HepG2 (cell line): ENCODE measurements at regions of chr2 and their contacts with region 1.

Region 1: DNA sequence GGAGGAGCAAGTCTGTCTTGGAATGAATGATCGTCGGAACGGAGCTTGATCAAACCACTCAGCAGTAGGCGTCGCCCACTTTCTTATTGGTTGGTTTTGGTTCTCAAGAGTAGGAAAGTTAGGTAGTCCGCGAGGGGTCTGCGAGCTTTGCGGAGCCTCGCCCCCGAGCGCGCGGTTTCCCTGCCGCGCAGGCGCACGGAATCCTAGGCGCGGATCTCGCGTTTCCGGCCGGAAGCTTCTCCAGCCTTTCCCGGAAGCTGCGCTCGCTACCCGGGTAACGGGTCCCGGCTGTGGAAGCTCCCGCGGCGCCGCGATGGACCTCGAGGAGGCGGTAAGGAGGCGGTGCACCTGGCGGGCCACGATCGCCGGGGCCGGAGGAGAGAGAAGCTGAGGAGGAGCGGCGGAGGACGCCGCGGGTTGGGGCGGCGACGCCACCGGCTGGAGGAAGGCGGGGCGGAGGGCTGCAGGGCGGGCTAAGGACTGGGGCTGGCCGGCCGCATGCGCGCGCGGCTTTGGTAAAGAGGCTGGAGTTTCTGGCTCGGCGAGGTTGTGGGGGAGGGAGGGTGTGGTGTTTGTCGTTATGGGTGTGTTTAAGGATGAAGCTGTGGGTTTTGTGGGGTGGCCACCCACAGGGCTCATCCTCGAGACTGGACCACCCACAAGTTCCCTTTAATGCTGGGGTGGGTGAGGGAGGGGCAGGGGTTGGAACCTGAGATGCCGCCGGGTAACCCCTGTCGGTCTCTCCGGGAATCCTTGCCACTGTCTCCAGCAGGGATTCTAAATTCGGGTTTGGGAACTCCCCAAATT is at the start of gene TAF1B:
- DNase-seq: peak; percentile 90
- ATAC-seq: peak; percentile 94
- H3K4me3 ChIP-seq: peak within 1 kb of the TSS; percentile 70 to 92 (median 81)
- H3K27ac ChIP-seq: peak within 1 kb of the TSS; percentile 74
- H3K4me1 ChIP-seq: peaks cover 39% of the 10 kb centered on the region
- H3K27me3 ChIP-seq: no peaks in the 10 kb centered on the region; a peak in 2 of 5 replicates
- CTCF ChIP-seq: peak; percentile 68
- EP300 ChIP-seq: peak in 1 of 2 experiments; percentile 29; a peak in 2 of 4 replicates
- POLR2A ChIP-seq: peak; percentile 69 to 84
- RAD21 ChIP-seq: peak; percentile 71
- total RNA-seq, gene TAF1B: 27.7 and 34.0 TPM in 2 replicates

Region 2: GRCh38 chr2:9548506-9548905 is 294.9 kb before region 1 on chr2:
- CTCF ChIA-PET with region 1: no interaction called
- POLR2A ChIA-PET with region 1: no interaction called
- in situ Hi-C with region 1: no loop called
- intact Hi-C with region 1: no loop called
- DNase-seq: no peak
- ATAC-seq: no peak
- H3K4me3 ChIP-seq: no peak overlapping the region
- H3K27ac ChIP-seq: no peak overlapping the region
- H3K4me1 ChIP-seq: peaks cover 44% of the 10 kb centered on the region
- H3K27me3 ChIP-seq: no peaks in the 10 kb centered on the region
- CTCF ChIP-seq: no peak
- EP300 ChIP-seq: no peak
- POLR2A ChIP-seq: no peak
- RAD21 ChIP-seq: no peak

Region 3: GRCh38 chr2:9813312-9814133 is 29.9 kb before region 1 on chr2:
- CTCF ChIA-PET with region 1: no interaction called
- POLR2A ChIA-PET with region 1: interaction called, 11 read pairs
- in situ Hi-C with region 1: no loop called
- intact Hi-C with region 1: no loop called
- DNase-seq: peak; percentile 56
- ATAC-seq: peak; percentile 90
- H3K4me3 ChIP-seq: peak overlapping the region; percentile 11 to 60 (median 32); a peak in 2 of 6 replicates
- H3K27ac ChIP-seq: no peak overlapping the region
- H3K4me1 ChIP-seq: peaks cover 23% of the 10 kb centered on the region; the same call in 1 of the 2 replicates
- H3K27me3 ChIP-seq: peaks cover 8 to 72% of the 10 kb centered on the region in 2 experiments; a peak in 4 of 5 replicates
- CTCF ChIP-seq: peak; percentile 99
- EP300 ChIP-seq: no peak
- POLR2A ChIP-seq: no peak
- RAD21 ChIP-seq: peak; percentile 93

Region 4: GRCh38 chr2:9820020-9820419 is 23.4 kb before region 1 on chr2:
- CTCF ChIA-PET with region 1: no interaction called
- POLR2A ChIA-PET with region 1: interaction called, 11 read pairs
- in situ Hi-C with region 1: no loop called
- intact Hi-C with region 1: no loop called
- DNase-seq: peak; percentile 39
- ATAC-seq: peak; percentile 46
- H3K4me3 ChIP-seq: no peak overlapping the region
- H3K27ac ChIP-seq: no peak overlapping the region
- H3K4me1 ChIP-seq: peaks cover 12% of the 10 kb centered on the region; the same call in 1 of the 2 replicates
- H3K27me3 ChIP-seq: peaks cover 5 to 29% of the 10 kb centered on the region in 2 experiments; a peak in 3 of 5 replicates
- CTCF ChIP-seq: no peak
- EP300 ChIP-seq: no peak
- POLR2A ChIP-seq: no peak
- RAD21 ChIP-seq: no peak

Region 5: DNA sequence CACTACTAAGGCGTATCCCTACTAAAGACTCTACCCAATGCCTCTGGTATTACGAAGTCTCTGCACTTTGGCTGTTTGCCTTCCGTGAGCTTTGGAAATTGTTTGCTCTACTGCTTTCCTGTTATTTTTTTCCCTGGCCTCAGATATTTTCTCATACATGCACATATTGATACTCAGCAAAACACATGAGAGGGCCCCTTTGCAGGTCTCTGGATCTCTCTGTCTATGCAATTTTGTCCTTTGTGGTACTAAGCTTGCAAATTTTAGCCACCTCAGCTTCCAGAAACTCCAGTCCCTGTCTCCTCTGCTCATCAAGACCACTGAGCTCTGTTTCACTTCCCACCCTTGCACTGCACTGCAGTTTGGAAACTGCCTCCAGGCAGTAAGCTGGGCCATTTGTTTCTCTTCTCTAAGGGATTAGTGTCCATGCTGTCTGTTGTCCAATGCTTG is 46.4 kb after region 1 on chr2:
- CTCF ChIA-PET with region 1: no interaction called
- POLR2A ChIA-PET with region 1: interaction called, 16 read pairs
- in situ Hi-C with region 1: no loop called
- intact Hi-C with region 1: no loop called
- DNase-seq: peak; percentile 92
- ATAC-seq: peak; percentile 98
- H3K4me3 ChIP-seq: peak overlapping the region in 2 of 3 experiments; percentile 17 to 44; a peak in 3 of 6 replicates
- H3K27ac ChIP-seq: peak overlapping the region; percentile 92
- H3K4me1 ChIP-seq: peaks cover 27% of the 10 kb centered on the region
- H3K27me3 ChIP-seq: no peaks in the 10 kb centered on the region
- CTCF ChIP-seq: no peak
- EP300 ChIP-seq: peak in 1 of 2 experiments; percentile 70; a peak in 1 of 4 replicates
- POLR2A ChIP-seq: no peak
- RAD21 ChIP-seq: no peak

Region 6: GRCh38 chr2:9951272-9951972 is 108.0 kb after region 1 on chr2 and contains the start of gene GRHL1:
- CTCF ChIA-PET with region 1: no interaction called
- POLR2A ChIA-PET with region 1: interaction called, 4 read pairs
- in situ Hi-C with region 1: no loop called
- intact Hi-C with region 1: loop called (anchors 2 kb)
- DNase-seq: peak; percentile 85
- ATAC-seq: peak; percentile 86
- H3K4me3 ChIP-seq: peak within 1 kb of the TSS; percentile 83 to 94 (median 84)
- H3K27ac ChIP-seq: peak within 1 kb of the TSS; percentile 76
- H3K4me1 ChIP-seq: peaks cover 69% of the 10 kb centered on the region
- H3K27me3 ChIP-seq: peaks cover 0 to 9% of the 10 kb centered on the region in 2 experiments; a peak in 1 of 5 replicates
- CTCF ChIP-seq: no peak
- EP300 ChIP-seq: no peak
- POLR2A ChIP-seq: 0 out of 4 replicates have a peak, but pooled peaks of 1 of the 2 experiments have one; percentile 46
- RAD21 ChIP-seq: peak; percentile 56
- total RNA-seq, gene GRHL1: 10.6 and 12.0 TPM in 2 replicates

Region 7: DNA sequence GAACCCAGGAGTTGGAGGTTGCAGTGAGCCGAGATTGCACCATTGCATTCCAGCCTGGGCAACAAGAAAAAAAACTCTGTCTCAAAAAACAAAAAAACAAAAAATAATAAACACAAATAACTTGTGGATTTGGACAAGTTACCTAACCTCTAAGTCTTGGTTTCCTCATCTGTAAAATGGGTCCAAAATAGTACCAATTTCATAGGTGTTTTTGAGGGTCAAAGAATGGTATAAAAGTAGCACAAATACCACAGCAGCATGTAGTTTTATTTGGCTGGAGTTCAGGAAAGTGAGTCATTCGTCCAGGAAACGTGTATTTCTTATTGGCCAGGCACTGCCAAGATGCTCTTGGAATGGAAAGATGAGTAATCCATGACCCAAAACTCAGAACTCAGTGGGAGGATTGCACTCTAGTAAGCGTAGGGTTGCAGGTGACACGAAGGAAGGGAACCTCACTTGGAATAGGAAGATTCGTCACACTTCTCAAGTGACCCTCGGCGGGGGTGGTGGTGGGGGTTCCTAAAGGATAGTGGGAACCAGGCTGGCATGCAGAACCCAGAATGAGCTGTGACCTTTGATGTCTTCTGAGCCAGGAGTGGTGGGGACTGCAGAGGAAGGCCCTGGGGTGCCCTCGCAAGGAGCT is 132.5 kb after region 1 on chr2:
- CTCF ChIA-PET with region 1: no interaction called
- POLR2A ChIA-PET with region 1: no interaction called
- in situ Hi-C with region 1: no loop called
- intact Hi-C with region 1: no loop called
- DNase-seq: no peak
- ATAC-seq: no peak
- H3K4me3 ChIP-seq: no peak overlapping the region
- H3K27ac ChIP-seq: no peak overlapping the region
- H3K4me1 ChIP-seq: no peaks in the 10 kb centered on the region
- H3K27me3 ChIP-seq: no peaks in the 10 kb centered on the region
- CTCF ChIP-seq: no peak
- EP300 ChIP-seq: no peak
- POLR2A ChIP-seq: no peak
- RAD21 ChIP-seq: no peak